Activated T-helper 2 cell treated with anti-CD3 and anti-CD28 coated beads, Interferon-gamma antibody, Interleukin-2, Interleukin-4, amounts not matched to agents 10 μg/mL and 5 μg/mL and 100 μg/mL, durations not matched to agents 14 hours and 24 hours and 36 hours (primary cell): ENCODE measurements at regions of chr2 and their contacts with region 1.

Region 1: GRCh38 chr2:156400706-156401678 is 35.2 kb upstream of the GPD2 start:
- DNase-seq: peak; percentile 65
- H3K4me3 Mint-ChIP-seq: peak overlapping the region; percentile 89
- H3K27ac Mint-ChIP-seq: peak overlapping the region; percentile 91
- H3K4me1 Mint-ChIP-seq: peaks cover 29% of the 10 kb centered on the region
- H3K27me3 Mint-ChIP-seq: no peaks in the 10 kb centered on the region

Region 2: DNA sequence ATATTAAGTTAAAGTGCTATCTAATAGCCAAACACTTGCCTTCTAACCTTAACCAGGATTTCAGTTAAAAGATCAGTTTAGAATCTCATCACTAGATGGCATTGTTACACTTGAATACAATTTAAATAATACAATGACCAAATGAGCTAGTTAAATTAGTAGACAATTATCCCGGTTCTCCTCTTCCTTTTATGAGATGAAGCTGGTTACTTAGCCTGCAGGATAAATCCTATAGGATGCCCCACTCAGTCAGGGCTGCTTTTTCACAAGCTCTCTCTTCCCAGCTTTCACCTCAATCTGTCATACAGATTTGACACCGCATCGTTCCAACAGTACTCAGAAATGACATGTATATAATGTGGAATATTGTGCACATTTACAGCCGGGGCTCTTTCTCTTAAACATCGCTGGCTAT is 1023.7 kb before region 1 on chr2:
- intact Hi-C with region 1: loop called (anchors 10 kb)
- DNase-seq: no peak
- H3K4me3 Mint-ChIP-seq: no peak overlapping the region
- H3K27ac Mint-ChIP-seq: peak overlapping the region; percentile 73
- H3K4me1 Mint-ChIP-seq: peaks cover 17% of the 10 kb centered on the region
- H3K27me3 Mint-ChIP-seq: peaks cover 9% of the 10 kb centered on the region

Region 3: GRCh38 chr2:156380117-156380645 is 20.8 kb before region 1 on chr2:
- intact Hi-C with region 1: loop called (anchors 1 kb)
- DNase-seq: no peak
- H3K4me3 Mint-ChIP-seq: no peak overlapping the region
- H3K27ac Mint-ChIP-seq: peak overlapping the region; percentile 43
- H3K4me1 Mint-ChIP-seq: peaks cover 43% of the 10 kb centered on the region
- H3K27me3 Mint-ChIP-seq: no peaks in the 10 kb centered on the region

Region 4: DNA sequence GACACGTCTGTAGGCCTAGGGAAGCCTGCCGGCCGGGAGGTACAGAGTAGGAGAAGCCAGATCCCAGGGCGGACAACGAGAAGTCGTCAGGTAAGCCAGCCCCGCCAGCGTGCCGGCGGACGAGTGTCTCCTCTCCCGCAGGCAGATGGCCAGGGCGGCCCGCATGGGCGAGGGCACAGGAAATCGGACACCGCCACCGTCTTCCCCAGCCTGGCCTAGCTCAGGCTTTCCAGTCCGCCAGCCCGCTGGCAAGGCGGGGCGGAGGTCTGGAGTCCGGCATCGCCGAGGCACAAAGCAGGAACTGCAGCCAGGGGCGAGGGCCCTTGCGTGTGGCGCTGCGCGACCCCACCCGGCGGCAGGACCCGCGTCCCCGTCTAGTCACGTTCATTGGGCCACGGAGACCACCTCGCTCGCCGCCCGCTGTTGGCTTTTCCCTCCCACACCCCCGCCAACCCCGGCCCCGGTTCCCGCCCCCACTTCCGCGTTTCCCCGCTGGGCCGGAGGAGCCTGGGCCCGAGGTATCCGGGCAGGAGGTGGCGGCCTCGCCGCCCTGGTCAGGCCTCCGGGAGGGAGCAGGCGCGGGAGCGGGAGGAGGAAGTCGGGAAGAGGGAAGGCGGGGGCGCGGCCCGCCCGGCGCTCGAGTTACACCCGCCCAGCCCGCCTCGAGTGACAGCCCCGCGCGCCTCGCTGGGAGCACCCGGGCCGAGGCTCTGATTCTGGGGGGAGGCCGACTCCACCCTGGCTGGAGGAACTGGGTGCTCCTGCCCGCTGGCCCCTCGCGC is 34.9 kb after region 1 on chr2 and contains the start of gene GPD2:
- intact Hi-C with region 1: loop called (anchors 1 kb)
- DNase-seq: peak; percentile 58
- H3K4me3 Mint-ChIP-seq: peak within 1 kb of the TSS; percentile 99
- H3K27ac Mint-ChIP-seq: peak within 1 kb of the TSS; percentile 98
- H3K4me1 Mint-ChIP-seq: peaks cover 43% of the 10 kb centered on the region
- H3K27me3 Mint-ChIP-seq: no peaks in the 10 kb centered on the region
- total RNA-seq, gene GPD2: 23.6 and 23.7 TPM in 2 replicates

Region 5: GRCh38 chr2:156589381-156590079 is 188.5 kb after region 1 on chr2:
- intact Hi-C with region 1: loop called (anchors 2 kb)
- DNase-seq: no peak
- H3K4me3 Mint-ChIP-seq: no peak overlapping the region
- H3K27ac Mint-ChIP-seq: no peak overlapping the region
- H3K4me1 Mint-ChIP-seq: peaks cover 11% of the 10 kb centered on the region
- H3K27me3 Mint-ChIP-seq: no peaks in the 10 kb centered on the region